ENCODE measurements at regions of chr3 and their contacts with region 1.

Region 1: DNA sequence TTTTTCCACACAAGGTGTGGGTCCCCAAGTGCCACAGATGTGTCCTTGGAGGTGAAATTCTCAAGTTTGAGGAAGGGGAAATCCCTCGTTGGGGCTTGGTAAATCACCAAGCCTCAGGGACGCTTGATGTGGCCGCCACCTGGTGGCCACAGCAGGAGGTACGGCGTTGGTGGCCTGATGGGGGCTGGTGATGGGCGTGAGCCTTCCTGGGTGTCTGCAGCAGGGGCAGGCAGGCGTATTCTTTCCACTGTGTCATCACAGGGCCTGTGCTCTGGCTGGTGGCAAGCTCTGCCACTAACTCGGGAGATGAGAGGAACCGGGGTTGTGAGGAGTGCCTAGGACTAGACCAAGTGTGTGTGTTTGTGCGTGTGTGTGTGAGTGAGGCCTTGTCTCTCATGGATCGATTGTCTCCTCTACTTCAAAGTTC is 4.2 kb downstream of the ACOX2 start:
- DNase-seq: peak; percentile 63 to 80 (median 73)
- ATAC-seq: peak; percentile 97
- H3K4me3 ChIP-seq: no peak overlapping the region
- H3K4me3 Mint-ChIP-seq: peak overlapping the region in 1 of 10 donors; percentile 50
- H3K27ac ChIP-seq: no peak overlapping the region
- H3K27ac Mint-ChIP-seq: peak overlapping the region in 4 of 9 donors; percentile 23 to 42 (median 31)
- H3K4me1 ChIP-seq: peaks cover 0 to 6% of the 10 kb centered on the region in 2 donors
- H3K4me1 Mint-ChIP-seq: peaks cover 5 to 8% (median 7%) of the 10 kb centered on the region in 7 donors
- H3K27me3 ChIP-seq: no peaks in the 10 kb centered on the region
- H3K27me3 Mint-ChIP-seq: peaks cover 0 to 6% (median 0%) of the 10 kb centered on the region in 5 donors

Region 2: GRCh38 chr3:58177747-58178527 is 354.9 kb before region 1 on chr3:
- CTCF ChIA-PET with region 1: no interaction called
- POLR2A ChIA-PET with region 1: no interaction called
- intact Hi-C with region 1: loop called in 1 of 2 experiments (anchors 1 kb)
- DNase-seq: peak; percentile 72 to 92 (median 84)
- ATAC-seq: peak; percentile 94
- H3K4me3 ChIP-seq: peak overlapping the region; percentile 49
- H3K4me3 Mint-ChIP-seq: peak overlapping the region; percentile 51 to 84 (median 74)
- H3K27ac ChIP-seq: no peak overlapping the region
- H3K27ac Mint-ChIP-seq: peak overlapping the region in 3 of 9 donors; percentile 18 to 43 (median 29)
- H3K4me1 ChIP-seq: peaks cover 6 to 8% of the 10 kb centered on the region in 2 donors
- H3K4me1 Mint-ChIP-seq: peaks cover 4 to 17% (median 13%) of the 10 kb centered on the region in 7 donors
- H3K27me3 ChIP-seq: no peaks in the 10 kb centered on the region
- H3K27me3 Mint-ChIP-seq: peaks cover 0 to 4% (median 0%) of the 10 kb centered on the region in 5 donors

Region 3: GRCh38 chr3:58237238-58237940 is 295.4 kb before region 1 on chr3 and contains the start of gene ABHD6:
- CTCF ChIA-PET with region 1: no interaction called
- POLR2A ChIA-PET with region 1: no interaction called
- intact Hi-C with region 1: loop called (anchors 1 kb)
- DNase-seq: peak; percentile 58 to 95 (median 86)
- ATAC-seq: peak; percentile 91
- H3K4me3 ChIP-seq: peak within 1 kb of the TSS; percentile 86
- H3K4me3 Mint-ChIP-seq: peak within 1 kb of the TSS; percentile 84 to 98 (median 92)
- H3K27ac ChIP-seq: peak within 1 kb of the TSS; percentile 72
- H3K27ac Mint-ChIP-seq: peak within 1 kb of the TSS; percentile 50 to 87 (median 81)
- H3K4me1 ChIP-seq: peaks cover 6 to 12% of the 10 kb centered on the region in 2 donors
- H3K4me1 Mint-ChIP-seq: peaks cover 9 to 18% (median 13%) of the 10 kb centered on the region in 7 donors
- H3K27me3 ChIP-seq: no peaks in the 10 kb centered on the region
- H3K27me3 Mint-ChIP-seq: peaks cover 0 to 29% (median 13%) of the 10 kb centered on the region in 5 donors
- total RNA-seq, gene ABHD6: 3.1 to 7.3 (median 6.6) TPM

Region 4: GRCh38 chr3:58332575-58333188 is 200.1 kb before region 1 on chr3 and contains the start of gene PXK:
- CTCF ChIA-PET with region 1: no interaction called
- POLR2A ChIA-PET with region 1: no interaction called
- intact Hi-C with region 1: loop called in 1 of 2 experiments (anchors 1 kb)
- DNase-seq: peak; percentile 63 to 89 (median 79)
- ATAC-seq: peak; percentile 94
- H3K4me3 ChIP-seq: peak within 1 kb of the TSS; percentile 68
- H3K4me3 Mint-ChIP-seq: peak within 1 kb of the TSS; percentile 83 to 100 (median 99)
- H3K27ac ChIP-seq: peak within 1 kb of the TSS; percentile 70
- H3K27ac Mint-ChIP-seq: peak within 1 kb of the TSS; percentile 65 to 97 (median 88)
- H3K4me1 ChIP-seq: peaks cover 20 to 22% of the 10 kb centered on the region in 2 donors
- H3K4me1 Mint-ChIP-seq: peaks cover 30 to 47% (median 38%) of the 10 kb centered on the region in 7 donors
- H3K27me3 ChIP-seq: no peaks in the 10 kb centered on the region
- H3K27me3 Mint-ChIP-seq: no peaks in the 10 kb centered on the region
- total RNA-seq, gene PXK: 17.3 to 38.9 (median 22.3) TPM

Region 5: DNA sequence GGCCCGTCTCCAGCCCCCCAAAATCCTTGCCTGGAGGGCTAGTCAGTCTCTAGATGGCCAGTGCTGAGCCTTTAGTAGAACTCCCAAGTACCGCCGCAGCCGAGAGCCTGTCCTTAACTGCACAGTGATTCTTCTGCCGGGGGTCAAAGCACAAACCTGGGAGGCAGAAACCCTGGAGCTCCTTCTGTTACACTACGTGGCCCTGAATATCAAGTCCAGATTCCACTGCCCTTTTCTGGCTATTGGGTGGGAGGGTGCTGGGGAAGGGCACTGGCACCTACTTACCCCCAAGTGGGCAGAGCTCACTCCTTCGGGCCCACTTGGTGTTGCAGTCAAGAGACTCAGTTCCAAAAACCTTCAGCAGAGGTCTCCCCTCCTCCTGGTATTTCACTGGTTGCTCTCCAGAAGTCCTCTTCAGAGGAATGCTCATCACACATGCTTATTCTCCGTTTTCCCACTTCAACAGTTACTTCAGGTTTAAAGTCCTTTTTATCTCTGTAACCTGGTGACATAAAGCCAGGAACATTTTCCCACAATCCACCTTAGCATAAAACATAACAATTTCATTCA is 110.0 kb before region 1 on chr3:
- CTCF ChIA-PET with region 1: interaction called, 7 read pairs
- POLR2A ChIA-PET with region 1: no interaction called
- intact Hi-C with region 1: loop called (anchors 1 to 5 kb)
- DNase-seq: no peak
- ATAC-seq: no peak
- H3K4me3 ChIP-seq: no peak overlapping the region
- H3K4me3 Mint-ChIP-seq: no peak overlapping the region
- H3K27ac ChIP-seq: no peak overlapping the region
- H3K27ac Mint-ChIP-seq: peak overlapping the region; percentile 4 to 65 (median 14)
- H3K4me1 ChIP-seq: no peaks in the 10 kb centered on the region
- H3K4me1 Mint-ChIP-seq: peaks cover 0 to 5% (median 0%) of the 10 kb centered on the region in 7 donors
- H3K27me3 ChIP-seq: no peaks in the 10 kb centered on the region
- H3K27me3 Mint-ChIP-seq: no peaks in the 10 kb centered on the region

Region 6: DNA sequence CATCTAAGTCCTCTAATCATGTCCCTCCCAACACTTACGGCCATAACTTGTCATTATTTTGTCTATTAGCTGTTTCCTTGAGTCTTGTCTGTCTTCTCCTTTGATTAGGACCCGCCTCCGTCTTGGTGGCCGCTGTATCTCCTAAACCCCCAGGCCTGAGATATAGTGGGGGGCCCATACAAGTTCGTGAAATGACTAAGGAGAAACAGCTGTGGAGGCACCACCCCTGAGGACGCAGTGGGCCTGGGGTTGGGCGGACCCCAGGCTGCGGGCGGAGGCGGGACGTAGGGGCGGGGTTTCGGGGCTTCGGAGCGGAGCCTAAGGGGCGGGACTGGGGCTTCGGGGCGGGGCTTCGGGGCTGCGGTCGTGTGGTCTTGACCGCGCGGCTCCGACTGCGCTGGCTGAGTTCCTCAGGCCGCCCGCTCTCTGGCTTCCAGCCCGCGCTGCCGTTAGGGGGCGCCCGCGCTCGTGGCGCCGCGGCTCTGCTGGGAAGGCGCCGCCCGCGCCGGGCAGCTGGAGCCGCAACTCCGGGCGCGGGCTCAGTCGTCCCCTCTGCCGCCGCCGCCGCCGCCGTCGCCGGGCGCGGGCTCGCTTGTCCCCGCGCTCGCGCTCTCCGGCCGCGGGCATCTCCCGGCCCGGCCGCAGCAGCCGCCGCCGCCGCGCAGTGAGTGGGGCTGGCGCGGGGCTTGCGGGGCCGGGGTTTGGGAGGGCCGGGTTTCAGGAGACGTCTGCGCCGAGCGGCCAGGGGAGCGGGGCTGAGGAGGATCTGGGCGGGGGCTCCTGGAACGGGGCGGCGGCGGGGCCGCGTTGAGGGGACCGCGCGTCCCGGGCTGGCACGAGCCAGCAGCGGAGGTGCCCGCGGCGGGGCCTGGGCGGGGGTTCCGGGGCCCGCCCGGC is 41.1 kb before region 1 on chr3 and contains the start of gene KCTD6:
- CTCF ChIA-PET with region 1: interaction called, 5 read pairs
- POLR2A ChIA-PET with region 1: interaction called, 4 read pairs
- intact Hi-C with region 1: loop called (anchors 1 kb)
- DNase-seq: peak; percentile 72 to 95 (median 84)
- ATAC-seq: peak; percentile 93
- H3K4me3 ChIP-seq: peak within 1 kb of the TSS; percentile 95
- H3K4me3 Mint-ChIP-seq: peak within 1 kb of the TSS; percentile 92 to 99 (median 94)
- H3K27ac ChIP-seq: peak within 1 kb of the TSS; percentile 69
- H3K27ac Mint-ChIP-seq: peak within 1 kb of the TSS; percentile 83 to 97 (median 90)
- H3K4me1 ChIP-seq: peaks cover 22 to 25% of the 10 kb centered on the region in 2 donors
- H3K4me1 Mint-ChIP-seq: peaks cover 37 to 64% (median 59%) of the 10 kb centered on the region in 7 donors
- H3K27me3 ChIP-seq: no peaks in the 10 kb centered on the region
- H3K27me3 Mint-ChIP-seq: peaks cover 0 to 45% (median 0%) of the 10 kb centered on the region in 5 donors
- total RNA-seq, gene KCTD6: 4.8 to 14.2 (median 10.9) TPM